ENCODE measurements at regions of chrX and their contacts with region 1.

Region 1: GRCh38 chrX:43581888-43582515 is 74.1 kb upstream of the MAOA start:
- DNase-seq: peak; percentile 73
- H3K4me3 ChIP-seq: no peak overlapping the region
- H3K27ac ChIP-seq: peak overlapping the region; percentile 72
- H3K4me1 ChIP-seq: peaks cover 27% of the 10 kb centered on the region
- H3K27me3 ChIP-seq: no peaks in the 10 kb centered on the region
- CTCF ChIP-seq: no peak

Region 2: GRCh38 chrX:43540318-43540717 is 41.7 kb before region 1 on chrX:
- CTCF ChIA-PET with region 1: no interaction called
- dilution Hi-C with region 1: no loop called
- in situ Hi-C with region 1: no loop called
- intact Hi-C with region 1: no loop called
- DNase-seq: no peak
- H3K4me3 ChIP-seq: no peak overlapping the region
- H3K27ac ChIP-seq: no peak overlapping the region
- H3K4me1 ChIP-seq: no peaks in the 10 kb centered on the region
- H3K27me3 ChIP-seq: peaks cover 5% of the 10 kb centered on the region
- CTCF ChIP-seq: no peak

Region 3: GRCh38 chrX:43564953-43565352 is 17.0 kb before region 1 on chrX:
- CTCF ChIA-PET with region 1: no interaction called
- dilution Hi-C with region 1: no loop called
- in situ Hi-C with region 1: no loop called
- intact Hi-C with region 1: loop called (anchors 2 kb)
- DNase-seq: no peak
- H3K4me3 ChIP-seq: no peak overlapping the region
- H3K27ac ChIP-seq: no peak overlapping the region
- H3K4me1 ChIP-seq: peaks cover 3% of the 10 kb centered on the region
- H3K27me3 ChIP-seq: no peaks in the 10 kb centered on the region
- CTCF ChIP-seq: peak; percentile 15 to 36

Region 4: GRCh38 chrX:43633777-43634176 is 51.8 kb after region 1 on chrX:
- CTCF ChIA-PET with region 1: interaction called, 3 read pairs
- dilution Hi-C with region 1: no loop called
- in situ Hi-C with region 1: no loop called
- intact Hi-C with region 1: loop called (anchors 5 kb)
- DNase-seq: peak; percentile 76
- H3K4me3 ChIP-seq: no peak overlapping the region
- H3K27ac ChIP-seq: peak overlapping the region; percentile 63
- H3K4me1 ChIP-seq: peaks cover 14% of the 10 kb centered on the region
- H3K27me3 ChIP-seq: peaks cover 4% of the 10 kb centered on the region
- CTCF ChIP-seq: no peak

Measured in mammary epithelial cell (primary cell).